GM10248 (cell line): ENCODE measurements at regions of chr6 and their contacts with region 1.

Region 1: DNA sequence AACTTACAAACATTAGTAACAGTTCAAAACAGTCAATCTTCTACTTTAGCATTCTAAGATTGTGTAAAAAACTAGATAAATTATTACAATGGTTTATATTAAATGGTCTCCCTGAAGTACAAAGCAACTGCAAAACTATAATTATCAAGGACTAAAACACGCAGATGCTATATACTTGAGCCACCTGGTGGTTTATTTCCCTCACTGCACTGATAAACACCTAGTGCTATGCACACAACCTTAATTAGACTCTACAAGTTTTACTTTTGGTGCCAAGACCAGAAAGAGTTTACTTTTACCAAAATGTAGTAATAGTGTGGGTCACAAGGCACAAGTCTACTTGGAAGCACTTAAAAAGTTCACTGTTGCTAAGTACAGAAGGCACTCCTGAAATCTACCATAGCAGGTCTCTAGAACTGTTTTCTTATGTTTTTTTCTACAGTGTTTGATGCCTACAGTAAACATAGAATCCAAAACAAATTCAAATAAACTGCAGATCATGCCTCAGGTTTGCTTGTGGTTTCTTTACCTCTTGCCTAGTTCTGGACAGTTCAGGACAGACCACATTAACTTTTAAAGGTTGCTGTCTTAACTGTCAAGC is 49.2 kb downstream of the GMDS start:
- DNase-seq: peak; percentile 38
- CTCF ChIP-seq: peak; percentile 78

Region 2: DNA sequence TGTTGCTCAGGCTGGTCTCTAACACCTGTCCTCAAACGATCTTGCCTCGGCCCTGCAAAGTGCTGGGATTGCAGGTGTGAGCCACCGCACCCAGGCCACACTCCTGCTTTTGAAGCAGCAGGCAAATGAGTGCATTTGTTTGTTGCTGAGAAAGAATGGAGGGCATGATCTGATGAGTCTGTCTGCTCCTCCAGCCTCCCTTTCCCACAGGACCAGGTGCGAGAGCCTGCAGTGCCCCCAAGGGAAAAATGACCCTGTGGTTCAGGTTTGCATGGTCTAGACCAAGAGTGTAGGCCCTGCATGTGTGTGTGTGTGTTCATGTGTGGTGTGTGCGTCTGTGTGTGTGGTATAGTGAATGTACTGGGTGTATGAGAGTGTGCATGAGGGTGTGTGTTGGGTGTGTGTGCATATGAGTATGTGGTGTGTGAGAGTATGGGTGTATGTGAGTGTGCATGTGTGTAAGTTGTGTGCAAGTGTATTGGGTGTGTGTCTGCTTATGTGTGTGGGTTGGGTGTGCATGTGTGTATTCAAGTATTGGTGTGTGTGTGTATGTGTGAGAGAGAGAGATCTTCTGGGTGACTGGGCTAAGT is 609.2 kb before region 1 on chr6:
- CTCF ChIA-PET with region 1: no interaction called
- POLR2A ChIA-PET with region 1: interaction called, 16 read pairs
- DNase-seq: no peak
- CTCF ChIP-seq: no peak

Region 3: GRCh38 chr6:1958257-1958656 is 237.9 kb before region 1 on chr6:
- CTCF ChIA-PET with region 1: no interaction called
- POLR2A ChIA-PET with region 1: no interaction called
- DNase-seq: no peak
- CTCF ChIP-seq: no peak

Region 4: DNA sequence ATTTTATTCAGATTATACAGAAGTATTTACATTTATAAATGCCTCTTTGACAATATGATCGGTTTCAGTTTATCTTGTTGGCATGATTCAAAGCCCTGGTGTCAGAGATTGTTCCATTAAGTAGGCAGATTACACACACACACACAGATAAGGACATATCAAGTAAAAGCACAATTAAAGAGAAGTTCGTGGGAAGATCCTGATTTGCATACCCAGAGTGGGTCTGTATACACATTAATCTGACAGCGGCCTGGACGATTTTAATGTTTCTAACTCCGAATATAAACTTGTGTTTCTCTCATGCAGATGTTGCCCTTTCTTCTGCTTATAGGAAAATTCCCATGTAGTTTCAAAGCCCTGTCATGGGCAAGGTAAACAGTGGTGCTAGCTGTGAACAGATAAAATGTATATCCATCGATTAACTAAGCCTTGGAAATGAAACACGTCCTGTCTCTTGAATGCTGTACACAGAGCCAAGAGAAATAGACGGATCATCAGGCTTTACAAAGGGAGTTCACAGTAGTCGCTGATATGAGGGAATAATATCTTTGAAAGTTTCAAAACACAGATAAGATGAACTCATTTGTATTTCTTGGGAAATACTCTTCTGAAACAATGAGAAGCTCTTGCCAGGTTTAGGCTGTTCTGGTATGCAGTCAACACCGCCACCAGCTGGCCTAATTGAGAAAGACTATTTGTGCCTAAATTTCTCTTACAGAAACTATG is 157.4 kb after region 1 on chr6:
- CTCF ChIA-PET with region 1: no interaction called
- POLR2A ChIA-PET with region 1: interaction called, 12 read pairs
- DNase-seq: peak; percentile 57
- CTCF ChIP-seq: peak; percentile 67